HepG2 (cell line): ENCODE measurements at regions of chr6 and their contacts with region 1.

Region 1: GRCh38 chr6:109939654-109940053 is 38.5 kb upstream of the GPR6 start:
- DNase-seq: peak; percentile 9
- ATAC-seq: no peak
- H3K4me3 ChIP-seq: no peak overlapping the region
- H3K27ac ChIP-seq: no peak overlapping the region
- H3K4me1 ChIP-seq: no peaks in the 10 kb centered on the region
- H3K27me3 ChIP-seq: peaks cover 2 to 11% of the 10 kb centered on the region in 2 experiments; a peak in 2 of 5 replicates
- CTCF ChIP-seq: no peak
- EP300 ChIP-seq: no peak
- POLR2A ChIP-seq: no peak
- RAD21 ChIP-seq: no peak

Region 2: DNA sequence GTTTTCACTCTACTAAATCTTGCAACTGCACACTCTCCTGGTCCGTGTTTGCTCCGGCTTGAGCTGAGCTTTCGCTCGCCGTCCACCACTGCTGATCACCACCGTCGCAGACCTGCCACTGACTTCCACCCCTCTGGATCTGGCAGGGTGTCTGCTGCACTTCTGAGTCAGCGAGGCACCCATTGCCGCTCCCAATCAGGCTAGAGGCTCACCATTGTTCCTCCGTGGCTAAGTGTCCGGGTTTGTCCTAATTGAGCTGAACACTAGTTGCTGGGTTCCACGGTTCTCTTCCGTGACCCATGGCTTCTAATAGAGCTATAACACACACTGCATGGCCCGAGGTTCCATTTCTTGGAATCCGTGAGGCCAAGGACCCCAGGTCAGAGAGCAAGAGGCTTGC is 60.1 kb before region 1 on chr6:
- CTCF ChIA-PET with region 1: no interaction called
- POLR2A ChIA-PET with region 1: no interaction called
- in situ Hi-C with region 1: no loop called
- intact Hi-C with region 1: no loop called
- DNase-seq: no peak
- ATAC-seq: no peak
- H3K4me3 ChIP-seq: no peak overlapping the region; a peak in 1 of 6 replicates
- H3K27ac ChIP-seq: no peak overlapping the region
- H3K4me1 ChIP-seq: no peaks in the 10 kb centered on the region
- H3K27me3 ChIP-seq: peaks cover 0 to 26% of the 10 kb centered on the region in 2 experiments; a peak in 3 of 5 replicates
- CTCF ChIP-seq: no peak
- EP300 ChIP-seq: no peak
- POLR2A ChIP-seq: no peak
- RAD21 ChIP-seq: no peak

Region 3: DNA sequence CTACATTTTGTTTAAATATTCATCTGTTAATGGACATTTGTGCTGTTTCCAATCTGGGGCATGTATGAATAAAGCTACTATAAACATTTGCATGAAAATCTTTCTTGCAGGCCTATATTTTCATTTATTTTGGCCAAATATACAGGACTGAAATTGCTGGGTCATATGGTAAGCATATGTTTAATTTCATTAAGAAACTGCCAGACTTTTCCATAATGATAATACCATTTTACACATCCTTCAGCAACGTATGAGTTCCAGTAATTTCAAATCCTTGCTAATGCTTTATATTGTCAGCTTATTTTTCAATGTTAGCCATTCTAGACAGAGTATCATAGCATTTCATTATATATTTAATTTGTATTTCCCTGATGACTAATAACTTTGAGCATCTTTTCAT is 89.5 kb after region 1 on chr6:
- CTCF ChIA-PET with region 1: no interaction called
- POLR2A ChIA-PET with region 1: no interaction called
- in situ Hi-C with region 1: no loop called
- intact Hi-C with region 1: loop called (anchors 5 kb)
- DNase-seq: no peak
- ATAC-seq: no peak
- H3K4me3 ChIP-seq: no peak overlapping the region
- H3K27ac ChIP-seq: no peak overlapping the region
- H3K4me1 ChIP-seq: no peaks in the 10 kb centered on the region
- H3K27me3 ChIP-seq: 0 out of 5 replicates have a peak, but pooled peaks cover 0 to 4% of the 10 kb centered on the region in 2 experiments
- CTCF ChIP-seq: no peak
- EP300 ChIP-seq: no peak
- POLR2A ChIP-seq: no peak
- RAD21 ChIP-seq: no peak